Heart left ventricle (tissue), 16 donors: ENCODE measurements at regions of chr1 and their contacts with region 1.

Region 1: GRCh38 chr1:74485622-74486021 is 26.8 kb downstream of the LRRC53 start:
- DNase-seq: no peak
- ATAC-seq: peak in 1 of 4 donors; percentile 19
- H3K4me3 ChIP-seq: no peak overlapping the region
- H3K27ac ChIP-seq: no peak overlapping the region
- H3K4me1 ChIP-seq: peaks cover 0 to 14% (median 0%) of the 10 kb centered on the region in 12 donors
- H3K27me3 ChIP-seq: no peaks in the 10 kb centered on the region
- CTCF ChIP-seq: no peak
- POLR2A ChIP-seq: no peak

Region 2: DNA sequence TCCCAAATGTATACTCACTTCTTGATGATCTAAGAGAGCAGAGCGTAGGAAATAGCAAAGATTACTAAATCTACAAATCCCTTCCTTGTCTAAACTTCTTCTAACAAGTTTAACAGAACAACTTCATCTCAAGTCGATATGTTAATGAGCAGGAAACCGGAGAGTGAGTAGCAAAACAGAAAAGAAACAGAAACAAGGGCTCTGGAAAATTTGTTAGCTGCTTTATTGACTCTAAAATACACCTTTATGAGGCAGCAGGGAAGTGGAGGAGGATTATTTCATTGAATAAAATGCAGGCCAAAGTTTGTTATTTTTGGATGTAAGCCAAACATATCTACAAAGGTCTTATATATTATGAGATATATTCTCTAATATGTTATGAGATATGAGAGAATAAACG is 480.1 kb before region 1 on chr1:
- intact Hi-C with region 1: loop called in 1 of 10 experiments (anchors 10 kb)
- DNase-seq: no peak
- ATAC-seq: no peak
- H3K4me3 ChIP-seq: no peak overlapping the region
- H3K27ac ChIP-seq: no peak overlapping the region
- H3K4me1 ChIP-seq: no peaks in the 10 kb centered on the region
- H3K27me3 ChIP-seq: peaks cover 0 to 14% (median 2%) of the 10 kb centered on the region in 9 donors
- CTCF ChIP-seq: no peak
- POLR2A ChIP-seq: no peak

Region 3: DNA sequence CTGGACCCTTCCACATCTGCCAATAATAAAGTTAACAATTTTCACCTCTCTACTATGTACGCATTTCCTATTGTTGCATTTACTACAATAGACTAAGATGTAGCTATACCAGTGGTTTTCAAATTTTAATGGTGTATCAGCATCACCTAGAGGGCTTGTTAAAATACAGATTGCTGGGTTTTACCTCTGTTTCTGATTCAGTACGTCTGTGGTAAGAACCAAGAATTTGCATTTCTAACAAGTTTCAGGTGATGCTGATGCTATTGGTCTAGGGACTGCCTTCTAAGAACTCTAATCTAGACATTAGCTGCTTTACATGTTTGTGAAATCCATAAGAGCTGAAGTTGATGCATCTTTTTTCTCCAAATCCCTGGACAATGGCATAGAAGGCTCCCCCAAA is 128.3 kb after region 1 on chr1:
- intact Hi-C with region 1: no loop called
- DNase-seq: no peak
- ATAC-seq: no peak
- H3K4me3 ChIP-seq: no peak overlapping the region
- H3K27ac ChIP-seq: no peak overlapping the region
- H3K4me1 ChIP-seq: no peaks in the 10 kb centered on the region
- H3K27me3 ChIP-seq: no peaks in the 10 kb centered on the region
- CTCF ChIP-seq: no peak
- POLR2A ChIP-seq: no peak